PC-9 (cell line): ENCODE measurements at regions of chr13 and their contacts with region 1.

Region 1: GRCh38 chr13:106284366-106284765 is 251.1 kb downstream of the EFNB2 start:
- DNase-seq: peak in 1 of 2 experiments; percentile 98
- H3K4me3 ChIP-seq: no peak overlapping the region
- H3K27ac ChIP-seq: peak overlapping the region; percentile 46
- H3K4me1 ChIP-seq: peaks cover 22% of the 10 kb centered on the region
- H3K27me3 ChIP-seq: no peaks in the 10 kb centered on the region
- CTCF ChIP-seq: no peak

Region 2: DNA sequence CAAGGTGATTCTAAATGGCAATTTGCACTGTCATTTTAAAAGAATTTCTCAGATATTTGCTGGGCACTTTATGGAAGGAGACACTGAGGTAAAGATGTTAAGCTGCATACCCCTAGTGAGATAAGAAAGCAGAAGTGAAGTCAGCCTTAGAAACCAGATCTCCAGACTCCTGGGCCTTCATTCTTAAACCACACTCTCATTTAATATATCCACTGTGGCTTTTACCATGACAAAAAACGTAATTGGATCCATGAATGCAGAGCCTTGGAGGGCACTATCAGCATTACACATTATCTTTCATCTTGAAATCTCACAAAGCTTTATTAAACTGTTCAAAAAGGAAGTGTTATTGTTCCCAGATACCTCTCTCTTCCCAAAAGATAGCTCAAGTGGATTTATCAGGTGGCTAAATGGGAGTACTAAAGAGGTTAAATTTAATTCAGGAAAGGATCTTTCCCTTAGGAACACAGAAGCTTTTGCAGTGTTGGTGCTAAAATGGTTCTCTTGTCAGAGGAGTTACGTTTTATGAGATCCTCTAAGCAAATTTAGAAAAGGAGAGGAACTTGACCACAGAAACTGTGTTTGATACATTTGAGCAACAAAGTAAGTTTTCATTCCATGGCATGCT is 809.3 kb before region 1 on chr13:
- CTCF ChIA-PET with region 1: no interaction called
- POLR2A ChIA-PET with region 1: interaction called, 16 read pairs
- intact Hi-C with region 1: no loop called
- DNase-seq: no peak
- H3K4me3 ChIP-seq: no peak overlapping the region
- H3K27ac ChIP-seq: no peak overlapping the region
- H3K4me1 ChIP-seq: no peaks in the 10 kb centered on the region
- H3K27me3 ChIP-seq: no peaks in the 10 kb centered on the region
- CTCF ChIP-seq: no peak

Region 3: DNA sequence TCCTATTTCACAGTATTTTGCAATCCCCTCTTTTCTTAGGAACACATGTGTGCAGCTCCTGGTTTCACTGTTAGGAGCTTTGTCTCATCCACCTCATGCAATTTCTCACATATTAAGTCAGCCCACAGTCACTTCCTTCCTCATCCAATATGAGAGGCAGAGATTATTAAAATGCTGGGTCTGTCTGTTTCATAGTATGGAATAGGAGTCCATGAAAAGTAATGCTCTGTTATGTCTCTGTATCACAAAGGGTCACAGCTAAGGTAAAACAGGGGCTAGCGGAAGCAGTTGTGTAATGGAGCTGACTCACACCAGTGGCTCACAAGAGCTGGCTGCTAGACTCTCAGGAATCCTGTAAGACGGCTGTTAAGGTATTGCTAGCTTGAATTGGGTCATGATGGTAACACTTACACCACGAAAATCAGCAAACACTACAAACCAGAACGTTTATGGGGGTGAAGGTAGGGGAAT is 34.6 kb after region 1 on chr13:
- CTCF ChIA-PET with region 1: no interaction called
- POLR2A ChIA-PET with region 1: no interaction called
- intact Hi-C with region 1: loop called (anchors 5 kb)
- DNase-seq: peak; percentile 72 to 98
- H3K4me3 ChIP-seq: peak overlapping the region; percentile 24; the same call in 1 of the 2 replicates
- H3K27ac ChIP-seq: peak overlapping the region; percentile 96
- H3K4me1 ChIP-seq: peaks cover 27% of the 10 kb centered on the region
- H3K27me3 ChIP-seq: no peaks in the 10 kb centered on the region
- CTCF ChIP-seq: no peak

Region 4: DNA sequence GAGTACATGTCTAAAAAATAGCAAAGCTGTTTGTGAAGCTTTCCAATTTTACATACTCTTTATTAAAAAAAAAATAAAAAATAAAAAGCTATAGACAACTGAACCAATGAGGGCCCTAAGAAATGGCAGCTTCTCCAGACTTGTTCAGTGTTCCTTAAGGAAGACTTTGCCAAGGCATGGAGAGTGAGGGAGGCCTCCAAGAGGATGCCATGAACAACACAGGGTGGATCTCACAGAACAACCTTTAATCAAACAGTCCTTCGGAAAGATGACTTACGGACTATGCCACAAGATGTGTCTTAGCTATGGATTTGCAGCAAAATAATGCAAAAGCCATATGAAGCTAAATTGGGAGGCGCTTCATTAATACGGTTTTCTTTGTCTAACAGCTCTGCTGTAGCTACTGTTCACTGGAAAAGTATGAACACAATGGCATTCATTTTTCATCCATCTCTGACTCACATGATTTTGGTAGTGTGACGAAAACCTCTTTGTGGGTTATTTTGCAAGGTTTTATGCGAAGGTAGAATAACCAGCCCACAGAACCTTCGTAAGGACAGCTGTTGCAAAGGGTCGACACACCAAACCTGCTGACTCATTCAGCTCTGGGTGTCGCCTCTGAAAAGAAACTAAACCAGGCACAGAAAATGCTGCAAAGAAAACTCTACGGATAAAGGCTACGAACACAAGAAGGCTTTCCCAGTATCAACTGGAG is 223.4 kb after region 1 on chr13:
- CTCF ChIA-PET with region 1: no interaction called
- POLR2A ChIA-PET with region 1: no interaction called
- intact Hi-C with region 1: no loop called
- DNase-seq: peak; percentile 59 to 89
- H3K4me3 ChIP-seq: peak overlapping the region; percentile 41; the same call in 1 of the 2 replicates
- H3K27ac ChIP-seq: peak overlapping the region; percentile 84
- H3K4me1 ChIP-seq: peaks cover 28% of the 10 kb centered on the region
- H3K27me3 ChIP-seq: no peaks in the 10 kb centered on the region
- CTCF ChIP-seq: no peak